ENCODE measurements at regions of chr22 and their contacts with region 1.

Region 1: DNA sequence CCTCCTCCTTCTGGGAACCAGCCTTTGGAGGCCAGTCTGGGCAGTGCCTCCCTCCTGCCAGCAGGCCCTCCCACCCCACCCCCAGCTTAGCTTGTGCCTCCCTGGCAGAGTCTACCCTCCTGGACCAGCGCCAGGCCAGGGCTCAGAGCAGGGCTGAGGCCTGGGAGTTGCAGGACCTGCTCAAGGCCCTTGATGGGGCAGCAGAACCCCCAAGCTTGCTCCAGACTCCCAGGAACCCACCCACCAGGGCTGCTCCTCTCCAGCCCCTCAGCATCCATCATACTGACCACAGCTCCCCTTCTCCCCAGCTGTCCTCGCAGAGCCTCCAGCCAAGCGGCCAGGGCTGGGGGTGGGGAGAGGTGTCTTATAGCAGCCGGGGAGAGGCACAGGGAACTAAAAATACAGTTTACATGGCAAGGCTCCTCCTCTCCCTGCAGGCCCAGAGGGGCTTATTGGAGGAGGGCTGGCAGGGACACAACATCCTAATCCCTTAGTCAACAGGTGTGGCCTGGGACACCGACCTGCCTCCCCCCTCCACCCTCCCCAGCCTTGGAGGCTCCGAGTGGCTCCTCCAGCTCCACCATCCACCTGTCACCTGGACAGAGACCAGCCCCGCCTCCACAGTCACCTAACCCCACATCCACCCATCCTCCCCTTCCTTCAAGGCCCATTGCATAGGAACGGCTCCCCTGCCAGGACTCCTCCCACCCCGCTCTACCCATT is 5.2 kb upstream of the MB start:
- DNase-seq: peak; percentile 50
- ATAC-seq: peak; percentile 54 to 58

Region 2: GRCh38 chr22:35589071-35589952 is 33.0 kb before region 1 on chr22:
- intact Hi-C with region 1: loop called in 1 of 2 experiments (anchors 5 kb)
- DNase-seq: no peak
- ATAC-seq: peak in 1 of 2 donors; percentile 54

Region 3: GRCh38 chr22:35697142-35697541 is 74.8 kb after region 1 on chr22:
- intact Hi-C with region 1: no loop called
- DNase-seq: no peak
- ATAC-seq: no peak